ENCODE measurements at regions of chr1 and their contacts with region 1.

Region 1: DNA sequence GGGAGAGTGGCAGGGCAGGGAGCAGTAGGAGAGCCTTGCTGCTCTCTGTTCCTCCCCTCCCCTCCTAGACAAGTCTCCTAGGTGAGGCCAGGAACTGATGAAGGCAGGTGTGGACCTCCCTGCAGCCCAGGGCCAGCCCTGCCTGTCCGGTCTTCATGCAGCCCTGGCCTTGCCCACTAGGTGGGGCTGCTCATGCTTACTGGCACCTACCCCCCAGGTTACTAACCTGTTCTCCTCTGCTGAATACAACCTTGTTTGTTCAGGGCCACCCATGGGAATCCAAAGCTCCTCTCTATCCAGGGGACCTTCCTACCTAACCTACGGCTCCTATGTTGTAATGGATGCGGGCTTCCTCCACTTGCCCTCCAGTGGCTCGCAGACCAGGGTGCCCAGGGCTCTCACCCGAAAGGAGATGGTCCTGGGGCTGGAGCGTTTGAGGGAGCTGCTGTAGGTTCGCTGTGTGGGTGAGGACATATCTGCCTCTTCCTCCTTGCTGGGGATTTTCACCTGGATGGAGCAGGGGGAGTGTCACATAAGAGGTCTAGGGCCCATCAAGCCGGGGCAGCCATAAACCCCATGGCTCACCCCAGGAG is 7.9 kb upstream of the TNNT2 start:
- DNase-seq: peak; percentile 62 to 82
- H3K4me3 ChIP-seq: no peak overlapping the region
- H3K27ac ChIP-seq: no peak overlapping the region
- H3K4me1 ChIP-seq: peaks cover 14% of the 10 kb centered on the region; the same call in 1 of the 2 replicates
- H3K27me3 ChIP-seq: no peaks in the 10 kb centered on the region
- CTCF ChIP-seq: peak; percentile 87

Region 2: DNA sequence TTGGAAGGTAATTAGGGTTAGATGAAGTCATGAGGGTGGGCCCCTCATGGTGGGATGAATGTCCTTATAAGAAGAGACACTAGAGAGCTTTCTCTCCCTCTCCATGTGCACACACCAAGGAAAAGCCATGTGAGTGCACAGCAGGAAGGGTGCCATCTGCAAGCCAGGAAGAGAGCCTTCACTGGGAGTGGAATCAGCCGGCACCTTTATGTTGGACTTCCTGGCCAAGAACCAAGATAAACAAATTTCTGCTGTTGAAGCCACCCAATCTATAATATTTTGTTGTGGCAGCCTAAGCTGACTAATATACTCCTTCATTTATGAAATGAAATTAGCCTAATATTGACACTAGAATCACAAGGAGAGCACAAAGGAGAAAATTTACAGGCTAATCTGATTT is 140.3 kb before region 1 on chr1:
- CTCF ChIA-PET with region 1: no interaction called
- POLR2A ChIA-PET with region 1: no interaction called
- intact Hi-C with region 1: no loop called
- DNase-seq: no peak
- H3K4me3 ChIP-seq: no peak overlapping the region
- H3K27ac ChIP-seq: no peak overlapping the region
- H3K4me1 ChIP-seq: no peaks in the 10 kb centered on the region
- H3K27me3 ChIP-seq: peaks cover 35% of the 10 kb centered on the region
- CTCF ChIP-seq: no peak

Region 3: DNA sequence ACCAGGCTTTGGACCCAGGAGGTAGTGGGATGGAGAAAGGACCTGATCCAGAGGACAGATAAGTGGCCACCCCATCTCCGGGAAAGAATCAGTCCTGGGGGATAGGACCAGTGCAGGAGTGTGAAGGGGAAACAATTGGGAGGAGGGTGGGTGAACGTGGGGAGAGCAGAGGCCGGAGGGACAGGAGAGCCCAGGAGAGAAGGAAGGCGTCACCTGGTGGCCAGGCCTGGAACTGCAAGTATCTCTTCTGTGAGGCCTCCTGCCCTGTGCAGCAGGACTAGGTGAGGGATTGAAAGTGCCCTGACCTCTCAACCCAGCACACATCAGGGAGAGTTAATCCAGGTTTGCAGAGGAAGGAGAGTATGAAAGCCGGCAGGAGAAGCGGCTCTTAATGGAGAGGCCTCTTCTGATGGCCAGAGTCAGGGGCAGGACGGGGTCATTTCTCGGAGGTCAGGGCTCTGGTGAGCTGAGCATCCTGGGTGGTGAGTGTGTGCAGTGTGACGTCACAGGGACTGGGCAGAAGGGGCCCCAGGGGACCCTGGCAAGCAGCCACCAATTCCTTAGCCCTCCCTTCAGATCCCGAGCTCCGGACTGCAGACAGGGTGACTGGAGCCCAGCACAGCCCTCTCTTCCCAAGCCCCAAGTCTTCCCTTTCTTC is 22.9 kb after region 1 on chr1:
- CTCF ChIA-PET with region 1: interaction called, 9 read pairs
- POLR2A ChIA-PET with region 1: no interaction called
- intact Hi-C with region 1: loop called (anchors 1 kb)
- DNase-seq: peak; percentile 67 to 84
- H3K4me3 ChIP-seq: no peak overlapping the region
- H3K27ac ChIP-seq: no peak overlapping the region
- H3K4me1 ChIP-seq: no peaks in the 10 kb centered on the region
- H3K27me3 ChIP-seq: peaks cover 9% of the 10 kb centered on the region; the same call in 1 of the 2 replicates
- CTCF ChIP-seq: peak; percentile 95

Region 4: GRCh38 chr1:201721082-201722049 is 336.0 kb after region 1 on chr1:
- CTCF ChIA-PET with region 1: no interaction called
- POLR2A ChIA-PET with region 1: no interaction called
- intact Hi-C with region 1: no loop called
- DNase-seq: no peak
- H3K4me3 ChIP-seq: no peak overlapping the region
- H3K27ac ChIP-seq: no peak overlapping the region
- H3K4me1 ChIP-seq: no peaks in the 10 kb centered on the region
- H3K27me3 ChIP-seq: no peaks in the 10 kb centered on the region
- CTCF ChIP-seq: no peak

Measured in PC-9 (cell line).